Activated CD4-positive, alpha-beta T cell treated with anti-CD3 and anti-CD28 coated beads, Interleukin-2, amount 10 ng/mL, durations not matched to agents 24 days and 14 days (primary cell): ENCODE measurements at regions of chr1 and their contacts with region 1.

Region 1: GRCh38 chr1:11364170-11364569 is 91.2 kb downstream of the UBIAD1 start:
- DNase-seq: peak; percentile 73
- H3K4me3 Mint-ChIP-seq: no peak overlapping the region
- H3K27ac Mint-ChIP-seq: no peak overlapping the region
- H3K4me1 Mint-ChIP-seq: no peaks in the 10 kb centered on the region
- H3K27me3 Mint-ChIP-seq: no peaks in the 10 kb centered on the region

Region 2: DNA sequence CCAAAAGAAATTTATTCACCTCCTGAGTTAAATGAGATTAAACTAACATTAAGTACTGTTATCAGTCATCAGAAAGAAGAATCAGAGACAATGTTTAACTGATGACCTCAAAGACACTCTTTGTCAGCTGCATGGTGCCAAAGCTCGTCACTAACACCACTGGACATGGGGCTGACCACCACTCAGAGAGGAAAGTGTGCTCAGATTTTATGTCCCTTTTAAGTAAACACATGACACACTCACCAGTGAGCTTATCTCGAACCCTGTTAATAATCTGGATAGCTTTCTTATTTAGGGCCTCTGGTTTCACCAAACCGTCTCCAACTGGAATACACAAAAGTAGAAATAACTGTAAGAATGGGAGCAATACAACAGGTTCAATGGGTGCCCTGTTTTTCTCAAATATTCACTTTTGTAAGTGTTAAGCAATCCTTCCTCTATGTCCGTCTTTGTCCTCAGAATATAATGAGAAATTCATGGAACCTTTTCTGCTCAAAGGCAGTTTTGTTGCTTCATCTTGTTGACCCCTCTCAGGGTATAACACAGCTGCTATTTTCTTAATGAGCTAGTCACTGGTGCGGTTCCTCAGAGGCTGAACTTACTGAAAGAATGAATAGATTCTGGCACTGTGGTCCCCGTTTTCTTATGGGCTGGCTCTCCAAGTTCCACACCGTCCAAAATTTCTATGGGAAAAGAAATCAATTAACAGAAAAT is 255.0 kb before region 1 on chr1:
- intact Hi-C with region 1: no loop called
- DNase-seq: no peak
- H3K4me3 Mint-ChIP-seq: no peak overlapping the region
- H3K27ac Mint-ChIP-seq: no peak overlapping the region
- H3K4me1 Mint-ChIP-seq: no peaks in the 10 kb centered on the region
- H3K27me3 Mint-ChIP-seq: no peaks in the 10 kb centered on the region

Region 3: DNA sequence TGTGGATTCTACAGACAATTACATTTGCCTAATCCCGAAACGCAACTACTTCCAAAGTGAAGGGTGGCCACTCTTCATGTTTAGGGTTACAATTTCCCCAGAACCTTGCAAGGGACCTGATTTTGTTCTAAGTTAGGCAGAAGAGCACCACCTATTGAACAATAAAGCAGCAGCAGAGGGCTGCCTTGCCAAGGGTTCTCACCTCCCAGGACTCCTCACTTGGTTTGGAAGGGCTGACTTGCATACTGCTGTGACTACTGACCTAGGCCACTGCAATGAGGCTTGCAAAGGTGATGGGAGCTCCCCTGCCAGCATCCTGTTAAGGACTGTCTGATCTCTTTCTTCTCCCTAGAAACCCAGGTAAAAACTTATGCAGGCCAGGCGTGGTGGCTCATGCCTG is 116.0 kb before region 1 on chr1:
- intact Hi-C with region 1: loop called (anchors 10 kb)
- DNase-seq: no peak
- H3K4me3 Mint-ChIP-seq: no peak overlapping the region
- H3K27ac Mint-ChIP-seq: no peak overlapping the region
- H3K4me1 Mint-ChIP-seq: no peaks in the 10 kb centered on the region
- H3K27me3 Mint-ChIP-seq: no peaks in the 10 kb centered on the region